Left ventricle myocardium superior (tissue), 1 donor: ENCODE measurements at regions of chr11 and their contacts with region 1.

Region 1: DNA sequence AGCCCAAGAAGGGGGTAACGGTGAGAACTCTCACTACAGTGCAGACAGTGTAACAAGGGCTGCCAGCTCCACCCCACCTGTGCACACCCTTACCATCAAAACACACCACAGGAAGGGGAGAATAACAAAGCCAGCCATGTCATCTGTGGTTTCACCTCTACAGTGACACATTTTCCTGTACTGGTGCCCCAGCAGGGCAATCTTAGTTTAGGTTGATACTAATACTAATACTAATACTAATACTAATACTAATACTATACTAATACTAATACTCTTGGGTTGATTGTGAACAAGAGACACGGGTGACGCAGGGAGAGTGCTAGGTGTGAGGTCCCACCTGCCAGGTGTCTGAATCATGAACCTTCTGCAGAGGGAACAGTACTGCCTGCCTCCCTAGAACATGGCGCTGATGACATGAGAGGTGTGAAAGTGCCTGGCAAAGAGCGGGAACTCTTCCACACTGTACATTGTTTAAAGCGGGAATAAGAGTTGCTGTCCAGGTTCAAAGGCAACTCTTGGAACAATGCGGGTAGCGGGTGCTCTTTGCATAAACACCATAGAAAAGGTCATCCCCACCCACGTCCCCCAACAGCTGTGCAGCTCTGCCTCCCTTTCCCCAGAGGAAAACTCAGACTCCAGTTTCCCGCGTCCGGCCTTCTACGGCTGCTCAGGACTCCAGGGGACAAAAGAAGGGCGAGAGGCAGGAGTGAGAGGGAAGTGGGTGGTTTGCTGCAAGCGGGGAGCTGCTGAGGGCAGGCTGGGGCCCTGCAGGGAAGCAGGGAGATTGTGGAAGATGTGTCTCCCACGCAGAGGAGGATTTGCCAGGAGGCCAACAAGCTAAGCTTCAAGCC is 25.0 kb upstream of the TMPRSS4 start:
- DNase-seq: peak; percentile 28
- ATAC-seq: no peak

Region 2: DNA sequence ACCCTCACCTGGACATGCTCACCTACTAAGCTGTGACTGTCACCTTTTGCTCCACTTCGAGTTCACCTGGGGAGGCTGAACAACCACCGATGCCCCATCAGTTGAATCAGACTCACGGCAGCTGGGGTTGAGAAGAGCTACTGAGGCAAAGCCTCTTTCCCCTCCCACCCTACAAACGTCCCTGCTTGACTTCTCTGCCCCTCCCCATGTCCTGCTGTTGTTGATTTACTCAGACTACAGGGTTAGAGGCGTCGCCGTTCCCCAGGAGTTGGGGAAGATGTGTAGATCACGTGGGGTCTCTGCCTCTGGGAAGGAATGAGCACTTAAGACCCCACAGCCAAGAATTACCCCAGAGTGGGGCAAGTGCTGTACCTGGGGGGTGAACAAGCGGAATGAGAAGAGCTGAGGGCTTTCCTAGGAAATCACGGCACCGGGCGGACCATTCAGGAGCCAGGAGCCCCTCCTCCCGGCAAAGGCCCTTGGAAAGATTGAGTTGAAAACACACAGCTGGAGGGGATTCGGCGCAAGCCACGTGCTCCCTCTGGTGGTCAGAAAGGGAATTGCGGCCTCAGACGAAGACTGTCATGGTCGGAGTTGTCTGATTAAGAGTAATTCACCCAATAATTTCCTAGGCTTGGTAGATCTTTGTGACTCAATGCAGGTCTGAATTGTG is 234.3 kb before region 1 on chr11:
- intact Hi-C with region 1: loop called (anchors 10 kb)
- DNase-seq: peak; percentile 85
- ATAC-seq: peak; percentile 76